Calu3 (cell line): ENCODE measurements at regions of chr17 and their contacts with region 1.

Region 1: GRCh38 chr17:37802712-37803416 is 58.0 kb upstream of the HNF1B start:
- DNase-seq: no peak
- H3K4me3 Mint-ChIP-seq: no peak overlapping the region
- H3K27ac Mint-ChIP-seq: no peak overlapping the region
- H3K4me1 Mint-ChIP-seq: peaks cover 15% of the 10 kb centered on the region
- H3K27me3 Mint-ChIP-seq: no peaks in the 10 kb centered on the region
- CTCF ChIP-seq: no peak

Region 2: GRCh38 chr17:37637956-37638355 is 164.9 kb before region 1 on chr17:
- CTCF ChIA-PET with region 1: interaction called, 10 read pairs
- intact Hi-C with region 1: no loop called
- DNase-seq: no peak
- H3K4me3 Mint-ChIP-seq: no peak overlapping the region
- H3K27ac Mint-ChIP-seq: no peak overlapping the region
- H3K4me1 Mint-ChIP-seq: peaks cover 19% of the 10 kb centered on the region
- H3K27me3 Mint-ChIP-seq: no peaks in the 10 kb centered on the region
- CTCF ChIP-seq: no peak

Region 3: DNA sequence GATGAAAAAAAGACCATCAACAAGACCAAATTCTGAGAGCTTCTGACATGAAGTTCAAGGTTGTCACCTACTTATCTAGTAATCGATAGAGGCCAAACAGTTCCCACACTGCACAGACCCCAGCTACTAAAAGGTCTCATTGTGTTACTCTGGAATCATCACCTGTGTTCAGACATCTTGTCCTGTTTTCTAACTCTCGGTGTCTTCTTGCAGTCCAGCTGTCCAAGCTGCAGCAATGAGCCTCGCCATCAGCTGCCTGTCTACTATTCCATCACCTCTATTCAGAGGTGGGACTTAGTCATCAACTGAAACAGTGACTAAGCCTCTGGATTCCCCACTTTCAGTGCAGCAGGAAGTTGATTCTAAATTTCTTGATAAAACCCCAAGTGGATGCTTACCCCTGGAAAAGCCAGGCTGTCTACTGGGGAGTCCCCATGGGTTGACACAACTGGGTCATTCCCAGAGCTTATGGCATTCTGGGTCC is 104.7 kb before region 1 on chr17:
- CTCF ChIA-PET with region 1: no interaction called
- intact Hi-C with region 1: no loop called
- DNase-seq: peak; percentile 81
- H3K4me3 Mint-ChIP-seq: peak overlapping the region; percentile 6
- H3K27ac Mint-ChIP-seq: peak overlapping the region; percentile 78
- H3K4me1 Mint-ChIP-seq: peaks cover 69% of the 10 kb centered on the region
- H3K27me3 Mint-ChIP-seq: no peaks in the 10 kb centered on the region
- CTCF ChIP-seq: no peak